HEK293 (cell line): ENCODE measurements at regions of chr6 and their contacts with region 1.

Region 1: DNA sequence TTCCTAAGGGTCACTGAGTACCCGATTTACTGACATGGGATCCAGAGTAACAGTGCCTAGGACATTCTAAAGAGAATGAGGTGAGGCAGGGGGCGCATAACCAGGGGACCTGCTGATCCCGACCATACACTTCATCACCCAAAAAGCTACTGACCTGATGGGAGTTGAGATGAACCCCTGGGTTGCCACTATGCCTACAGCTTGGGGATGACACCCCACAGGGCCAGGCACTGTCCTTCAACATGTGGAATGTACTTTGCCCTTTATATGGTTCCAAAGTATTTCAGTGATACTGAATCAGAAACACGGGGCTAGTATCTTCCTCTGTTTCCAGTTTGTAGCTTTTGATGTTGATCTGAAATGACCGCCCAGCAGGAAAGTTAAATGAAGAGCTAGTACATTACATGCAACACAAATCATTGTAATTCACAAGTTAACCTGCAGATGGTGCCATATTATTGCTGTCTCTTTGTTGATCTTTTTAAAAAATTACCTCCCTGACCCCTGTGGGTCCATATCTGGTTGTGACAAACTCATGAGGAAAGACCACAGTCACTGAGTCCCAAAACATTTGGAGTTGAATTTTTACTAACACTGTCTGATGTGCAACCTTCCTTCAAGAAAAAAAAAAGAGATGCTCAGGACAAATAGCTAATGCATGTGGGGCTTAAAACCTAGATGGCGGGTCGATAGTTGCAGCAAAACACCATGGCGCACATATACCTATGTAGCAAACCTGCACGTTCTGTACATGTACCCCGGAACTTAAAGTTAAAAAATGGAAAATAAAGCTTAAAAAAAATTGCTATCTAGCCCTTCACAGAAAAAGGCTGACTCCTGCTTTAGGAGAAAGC is 42.7 kb upstream of the GCNT2 start:
- H3K4me3 ChIP-seq: no peak overlapping the region
- H3K27ac ChIP-seq: no peak overlapping the region
- H3K4me1 ChIP-seq: no peaks in the 10 kb centered on the region
- CTCF ChIP-seq: no peak

Region 2: DNA sequence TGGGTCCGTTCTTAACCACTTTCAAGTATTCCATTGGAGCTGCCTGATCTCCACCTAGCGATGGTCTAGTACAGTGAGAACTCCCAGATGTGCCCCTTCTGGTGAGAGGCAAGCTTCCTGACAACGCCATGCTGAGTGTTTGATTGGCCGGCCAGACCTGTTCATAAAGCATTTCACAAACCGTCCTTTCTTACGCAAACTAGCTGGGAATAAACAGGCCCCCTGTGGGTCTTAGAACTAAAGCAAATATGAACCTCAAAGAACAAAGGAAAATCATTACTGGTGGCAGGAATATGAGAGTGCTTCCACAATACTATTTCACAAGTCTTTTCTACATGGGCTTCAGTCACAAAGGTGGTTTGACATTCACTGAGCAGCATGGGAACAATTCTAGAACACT is 27.1 kb after region 1 on chr6:
- CTCF ChIA-PET with region 1: interaction called, 18 read pairs
- POLR2A ChIA-PET with region 1: no interaction called
- H3K4me3 ChIP-seq: no peak overlapping the region
- H3K27ac ChIP-seq: no peak overlapping the region
- H3K4me1 ChIP-seq: no peaks in the 10 kb centered on the region; the same call in 1 of the 2 replicates
- CTCF ChIP-seq: no peak

Region 3: GRCh38 chr6:10528170-10528981 is 50.0 kb after region 1 on chr6:
- CTCF ChIA-PET with region 1: interaction called, 10 read pairs
- POLR2A ChIA-PET with region 1: no interaction called
- H3K4me3 ChIP-seq: peak overlapping the region; percentile 3
- H3K27ac ChIP-seq: no peak overlapping the region
- H3K4me1 ChIP-seq: peaks cover 4% of the 10 kb centered on the region
- CTCF ChIP-seq: no peak

Region 4: DNA sequence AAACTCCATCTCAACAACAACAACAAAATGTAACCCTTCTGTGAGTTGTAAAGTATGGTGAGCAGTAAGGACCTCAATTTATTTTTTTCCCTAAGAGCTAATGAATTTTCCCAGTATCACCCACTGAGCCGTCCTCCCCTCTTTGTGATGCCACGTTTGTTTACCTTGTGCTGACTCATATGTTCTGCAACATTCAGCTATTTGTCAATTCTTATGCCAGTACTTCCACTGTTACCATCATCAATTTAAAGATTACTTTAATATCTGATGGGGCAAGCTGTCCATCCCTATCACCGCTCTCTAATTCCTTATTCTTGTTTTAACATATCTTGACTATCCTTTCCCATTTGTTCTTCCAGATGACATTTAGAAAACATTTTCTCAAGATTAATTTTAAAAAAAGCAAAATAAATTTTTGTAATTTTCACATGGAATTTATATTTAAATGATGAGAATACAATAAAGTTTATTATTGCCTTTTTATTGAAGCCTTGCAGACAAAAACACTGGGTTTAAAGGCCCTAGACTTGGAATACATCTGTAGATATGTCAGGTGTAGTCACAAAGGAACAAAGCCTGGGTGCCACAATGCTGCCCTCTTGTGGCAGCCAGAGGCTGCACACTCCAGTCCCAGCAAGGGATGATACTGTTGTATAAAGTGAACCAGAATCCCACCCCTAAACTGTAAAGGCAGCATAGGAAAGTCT is 322.6 kb after region 1 on chr6:
- CTCF ChIA-PET with region 1: interaction called, 77 read pairs
- POLR2A ChIA-PET with region 1: interaction called, 3 read pairs
- H3K4me3 ChIP-seq: no peak overlapping the region
- H3K27ac ChIP-seq: no peak overlapping the region
- H3K4me1 ChIP-seq: no peaks in the 10 kb centered on the region
- CTCF ChIP-seq: peak; percentile 32; the same call in 1 of the 2 replicates

Region 5: DNA sequence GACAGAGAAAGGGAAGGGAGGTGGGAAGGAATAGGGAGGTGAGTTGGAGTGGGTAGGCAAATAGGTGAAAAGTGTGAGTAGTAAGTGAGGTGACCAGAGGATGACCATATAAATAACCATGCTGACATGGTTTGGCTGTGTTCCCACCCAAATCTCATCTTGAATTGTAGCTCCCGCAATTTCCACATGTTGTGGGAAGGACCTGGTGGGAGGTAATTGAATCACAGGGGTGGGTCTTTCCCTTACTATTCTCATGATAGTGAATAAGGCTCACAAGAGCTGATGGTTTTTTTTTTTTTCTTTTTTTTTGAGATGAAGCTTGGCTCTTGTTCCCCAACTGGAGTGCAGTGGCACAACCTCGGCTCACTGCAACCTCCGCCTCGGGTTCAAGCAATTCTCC is 593.7 kb after region 1 on chr6:
- CTCF ChIA-PET with region 1: interaction called, 14 read pairs
- POLR2A ChIA-PET with region 1: no interaction called
- H3K4me3 ChIP-seq: no peak overlapping the region
- H3K27ac ChIP-seq: no peak overlapping the region
- H3K4me1 ChIP-seq: 0 out of 2 replicates have a peak, but pooled peaks cover 2% of the 10 kb centered on the region
- CTCF ChIP-seq: no peak